ENCODE measurements at regions of chr4 and their contacts with region 1.

Region 1: GRCh38 chr4:42568610-42569207 is 88.2 kb downstream of the ATP8A1 start:
- DNase-seq: peak; percentile 9 to 54
- H3K4me3 ChIP-seq: no peak overlapping the region
- H3K27ac ChIP-seq: no peak overlapping the region
- H3K4me1 ChIP-seq: no peaks in the 10 kb centered on the region
- H3K27me3 ChIP-seq: no peaks in the 10 kb centered on the region
- CTCF ChIP-seq: peak in 2 of 3 experiments; percentile 68 to 79; a peak in 3 of 4 replicates
- EP300 ChIP-seq: no peak
- POLR2A ChIP-seq: no peak
- RAD21 ChIP-seq: peak; percentile 88 to 91

Region 2: DNA sequence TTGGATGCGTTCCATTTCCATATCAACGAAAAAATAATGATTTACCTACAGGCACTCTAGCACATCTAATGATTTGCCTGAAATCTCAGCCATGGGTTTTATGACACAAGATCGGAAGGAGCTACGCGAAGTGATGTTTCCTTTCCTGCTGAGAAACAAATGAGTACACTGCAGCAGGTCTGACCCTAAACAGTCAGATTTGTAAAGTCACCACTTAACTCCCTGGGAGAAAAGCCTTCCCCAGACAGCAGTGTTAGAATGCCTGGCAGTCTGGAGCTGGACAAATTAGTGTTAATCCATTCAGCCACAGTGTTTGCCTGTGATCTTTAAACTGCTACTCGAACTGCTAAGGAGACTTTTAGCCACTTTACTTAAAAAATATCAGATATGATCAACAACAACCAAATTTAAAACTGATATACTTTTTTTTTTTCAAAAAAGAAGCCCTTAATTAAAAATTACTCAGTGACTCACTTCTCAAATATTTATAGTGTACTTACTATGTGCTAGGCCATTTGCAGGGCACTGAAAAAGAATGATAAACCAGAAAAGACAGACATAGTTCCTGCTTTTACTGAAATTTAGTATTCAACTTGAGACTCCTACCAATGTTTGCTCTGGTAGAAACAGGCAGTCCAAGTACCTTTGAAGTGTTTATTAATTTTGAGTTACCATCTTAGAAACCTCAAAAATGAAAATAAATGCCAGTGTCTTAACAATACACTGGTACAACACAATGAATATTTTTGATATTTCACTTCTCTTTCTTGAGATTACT is 66.9 kb before region 1 on chr4:
- CTCF ChIA-PET with region 1: no interaction called
- POLR2A ChIA-PET with region 1: no interaction called
- DNase-seq: no peak
- H3K4me3 ChIP-seq: no peak overlapping the region
- H3K27ac ChIP-seq: no peak overlapping the region
- H3K4me1 ChIP-seq: peaks cover 0 to 6% (median 4%) of the 10 kb centered on the region in 4 experiments; a peak in 3 of 7 replicates
- H3K27me3 ChIP-seq: no peaks in the 10 kb centered on the region
- CTCF ChIP-seq: no peak
- EP300 ChIP-seq: no peak
- POLR2A ChIP-seq: no peak
- RAD21 ChIP-seq: no peak

Region 3: DNA sequence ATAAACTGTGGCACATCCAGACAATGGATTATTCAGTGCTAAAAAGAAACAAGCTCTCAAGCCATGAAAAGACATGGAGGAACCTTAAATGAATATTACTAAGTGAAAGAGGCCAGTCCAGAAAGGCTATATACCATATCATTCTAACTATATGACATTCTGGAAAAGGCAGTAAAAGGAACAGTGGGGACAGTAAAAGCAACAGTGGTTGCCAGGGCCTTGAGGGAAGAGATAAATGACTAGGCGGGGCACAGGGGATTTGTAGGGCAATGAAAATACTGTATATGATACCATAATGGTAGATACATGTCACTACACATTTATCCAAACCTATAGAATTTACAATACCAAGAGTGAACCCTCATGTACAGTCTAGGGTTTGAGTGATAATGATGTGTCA is 27.1 kb before region 1 on chr4:
- CTCF ChIA-PET with region 1: no interaction called
- POLR2A ChIA-PET with region 1: no interaction called
- DNase-seq: no peak
- H3K4me3 ChIP-seq: no peak overlapping the region
- H3K27ac ChIP-seq: no peak overlapping the region
- H3K4me1 ChIP-seq: no peaks in the 10 kb centered on the region
- H3K27me3 ChIP-seq: no peaks in the 10 kb centered on the region
- CTCF ChIP-seq: no peak
- EP300 ChIP-seq: no peak
- POLR2A ChIP-seq: no peak
- RAD21 ChIP-seq: no peak

Region 4: DNA sequence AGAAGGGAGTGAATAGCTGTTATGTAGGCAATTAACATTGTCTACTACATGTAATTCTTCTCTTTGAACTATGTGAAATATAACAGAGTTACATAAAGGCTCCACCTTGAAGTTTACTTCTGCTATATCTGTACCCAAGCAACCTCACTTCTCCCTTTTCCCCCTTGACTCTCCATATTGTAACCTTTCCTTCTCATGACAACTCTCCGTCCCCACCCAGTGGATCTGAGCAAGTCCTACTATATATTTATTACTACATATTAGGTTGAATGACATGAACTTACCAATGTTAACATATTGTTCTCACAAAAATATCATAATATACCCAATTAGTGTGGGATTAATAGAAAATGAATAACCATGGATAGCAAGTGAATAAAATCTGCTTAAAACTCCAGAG is 181.4 kb after region 1 on chr4:
- CTCF ChIA-PET with region 1: interaction called, 11 read pairs
- POLR2A ChIA-PET with region 1: no interaction called
- DNase-seq: no peak
- H3K4me3 ChIP-seq: no peak overlapping the region
- H3K27ac ChIP-seq: no peak overlapping the region
- H3K4me1 ChIP-seq: no peaks in the 10 kb centered on the region
- H3K27me3 ChIP-seq: no peaks in the 10 kb centered on the region
- CTCF ChIP-seq: peak in 2 of 3 experiments; percentile 29 to 43; a peak in 2 of 4 replicates
- EP300 ChIP-seq: no peak
- POLR2A ChIP-seq: no peak
- RAD21 ChIP-seq: peak; percentile 67 to 74

Region 5: DNA sequence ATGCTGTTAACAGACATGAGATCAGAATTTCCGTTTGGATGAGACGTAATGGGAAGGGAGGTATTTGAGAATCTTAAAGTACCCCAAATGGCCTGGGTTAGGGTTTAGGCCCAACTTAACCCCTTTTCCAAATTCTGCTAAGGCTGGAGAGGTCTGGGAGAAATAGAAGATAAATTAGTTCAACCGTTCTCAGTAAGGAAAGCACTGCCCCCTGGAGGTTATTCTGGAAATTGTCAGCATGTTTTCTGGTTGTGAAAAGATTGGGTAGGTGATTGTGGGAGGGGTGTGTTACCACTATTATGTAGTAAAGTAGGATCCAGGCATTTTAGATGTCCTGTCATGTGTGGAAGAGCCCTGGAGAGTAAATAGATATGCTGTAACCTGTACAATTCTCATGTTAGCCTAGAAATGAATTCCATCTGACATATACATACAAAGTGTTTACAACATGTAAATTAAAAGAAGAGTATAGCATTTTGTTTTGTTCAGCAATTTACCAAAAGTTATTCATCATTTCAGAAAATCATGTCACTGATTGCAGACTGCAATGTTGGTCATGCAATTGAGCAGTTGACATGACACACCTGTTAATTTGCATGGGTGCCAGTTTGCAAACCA is 297.0 kb after region 1 on chr4:
- CTCF ChIA-PET with region 1: interaction called, 19 read pairs
- POLR2A ChIA-PET with region 1: no interaction called
- DNase-seq: peak; percentile 5 to 81
- H3K4me3 ChIP-seq: no peak overlapping the region
- H3K27ac ChIP-seq: no peak overlapping the region
- H3K4me1 ChIP-seq: no peaks in the 10 kb centered on the region
- H3K27me3 ChIP-seq: peaks cover 0 to 1% (median 0%) of the 10 kb centered on the region in 4 experiments; a peak in 1 of 7 replicates
- CTCF ChIP-seq: peak in 2 of 3 experiments; percentile 52 to 69; a peak in 2 of 4 replicates
- EP300 ChIP-seq: no peak
- POLR2A ChIP-seq: no peak
- RAD21 ChIP-seq: peak; percentile 80 to 85